Activated T-helper 2 cell treated with anti-CD3 and anti-CD28 coated beads, Interferon-gamma antibody, Interleukin-2, Interleukin-4, amounts not matched to agents 10 μg/mL and 5 μg/mL and 100 μg/mL, durations not matched to agents 14 hours and 24 hours and 36 hours (primary cell): ENCODE measurements at regions of chr11 and their contacts with region 1.

Region 1: GRCh38 chr11:82996966-82997606 is 74.6 kb downstream of the RAB30 start:
- DNase-seq: no peak
- H3K4me3 Mint-ChIP-seq: no peak overlapping the region
- H3K27ac Mint-ChIP-seq: peak overlapping the region; percentile 80
- H3K4me1 Mint-ChIP-seq: peaks cover 78% of the 10 kb centered on the region
- H3K27me3 Mint-ChIP-seq: no peaks in the 10 kb centered on the region

Region 2: GRCh38 chr11:82936261-82936660 is 60.8 kb before region 1 on chr11:
- intact Hi-C with region 1: no loop called
- DNase-seq: no peak
- H3K4me3 Mint-ChIP-seq: no peak overlapping the region
- H3K27ac Mint-ChIP-seq: no peak overlapping the region
- H3K4me1 Mint-ChIP-seq: peaks cover 26% of the 10 kb centered on the region
- H3K27me3 Mint-ChIP-seq: no peaks in the 10 kb centered on the region

Region 3: DNA sequence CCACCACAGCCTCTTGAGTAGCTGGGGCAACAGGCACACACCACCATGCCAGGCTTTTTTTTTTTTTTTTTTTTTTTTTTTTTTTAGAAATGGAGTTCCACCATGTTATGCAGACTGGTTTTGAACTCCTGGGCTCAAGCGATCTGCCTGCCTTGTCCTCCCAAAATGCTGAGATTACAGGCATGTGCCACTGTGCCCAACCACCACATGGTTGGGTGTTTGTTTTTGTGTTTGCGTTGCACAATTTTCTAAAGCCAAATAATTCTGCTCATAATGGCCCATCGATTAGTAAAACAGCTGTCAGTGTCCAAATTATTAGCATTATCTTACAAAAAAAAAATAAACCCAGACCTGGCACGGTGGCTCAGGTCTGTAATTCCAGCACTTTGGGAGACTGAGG is 29.7 kb before region 1 on chr11:
- intact Hi-C with region 1: no loop called
- DNase-seq: no peak
- H3K4me3 Mint-ChIP-seq: no peak overlapping the region
- H3K27ac Mint-ChIP-seq: no peak overlapping the region
- H3K4me1 Mint-ChIP-seq: peaks cover 22% of the 10 kb centered on the region
- H3K27me3 Mint-ChIP-seq: peaks cover 10% of the 10 kb centered on the region

Region 4: DNA sequence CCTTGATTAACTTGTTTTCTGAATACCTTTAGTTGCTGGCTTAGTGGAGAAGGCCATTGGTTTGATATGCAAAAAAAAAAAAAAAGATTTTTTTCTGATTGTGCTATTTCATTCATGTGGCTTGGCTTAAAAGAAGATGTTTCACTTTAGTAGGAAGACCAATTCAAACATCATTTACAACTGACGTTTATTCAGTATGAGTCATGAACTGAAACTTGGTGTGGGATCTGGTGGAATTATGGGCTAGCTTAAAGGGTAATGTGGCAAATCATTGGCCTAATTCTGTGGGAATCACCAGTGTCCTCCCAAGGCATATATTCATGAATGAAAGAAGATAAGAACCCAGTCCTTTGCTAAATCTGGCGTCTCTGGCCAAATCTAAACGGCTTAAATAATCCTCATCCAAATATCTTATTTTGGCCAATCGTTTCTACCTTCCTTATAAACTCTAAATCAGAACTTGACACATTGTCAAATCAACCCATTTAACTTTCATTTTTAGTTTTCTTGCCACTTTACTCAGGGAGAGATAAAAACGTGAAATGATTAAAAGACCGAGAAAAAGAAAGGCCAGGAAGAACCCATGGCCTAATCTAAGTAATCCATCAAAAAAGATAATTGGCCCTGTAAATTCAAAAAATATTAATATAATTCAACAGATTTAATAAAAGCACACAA is 18.5 kb before region 1 on chr11:
- intact Hi-C with region 1: loop called (anchors 1 kb)
- DNase-seq: no peak
- H3K4me3 Mint-ChIP-seq: peak overlapping the region; percentile 9
- H3K27ac Mint-ChIP-seq: peak overlapping the region; percentile 73
- H3K4me1 Mint-ChIP-seq: peaks cover 42% of the 10 kb centered on the region
- H3K27me3 Mint-ChIP-seq: no peaks in the 10 kb centered on the region

Region 5: DNA sequence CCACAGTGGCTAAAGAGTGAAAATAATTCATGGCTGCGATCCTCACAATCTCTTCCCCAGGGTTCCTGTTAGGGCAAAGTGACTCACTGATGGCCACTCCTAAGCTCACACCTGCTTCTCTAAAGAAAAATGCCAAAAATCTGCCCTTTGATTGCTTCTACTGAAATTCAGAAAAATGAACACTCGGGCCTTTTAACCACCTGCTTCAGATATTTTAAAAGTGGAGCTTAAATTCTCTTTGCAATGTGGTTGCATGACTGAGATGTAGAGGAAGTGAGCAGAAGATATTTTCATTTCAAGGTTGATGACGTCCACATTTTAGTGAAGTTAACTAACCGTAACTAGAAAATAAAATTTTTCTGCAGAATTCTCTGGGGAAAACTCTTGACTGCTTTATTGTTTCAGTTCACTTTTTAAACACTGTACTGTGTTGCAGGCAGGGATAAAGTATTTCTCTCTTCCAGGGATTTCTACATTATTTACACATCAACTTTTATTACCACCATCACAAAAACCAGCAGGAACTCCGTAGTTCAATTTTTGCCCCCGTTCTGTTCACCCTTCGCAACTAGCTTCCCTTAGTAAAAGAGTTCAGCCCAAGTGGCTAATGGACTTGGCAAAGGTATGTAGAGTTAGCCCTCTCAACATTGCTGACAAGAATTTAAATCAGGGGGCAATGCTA is 66.1 kb after region 1 on chr11:
- intact Hi-C with region 1: loop called (anchors 2 kb)
- DNase-seq: no peak
- H3K4me3 Mint-ChIP-seq: peak overlapping the region; percentile 73
- H3K27ac Mint-ChIP-seq: peak overlapping the region; percentile 95
- H3K4me1 Mint-ChIP-seq: peaks cover 46% of the 10 kb centered on the region
- H3K27me3 Mint-ChIP-seq: no peaks in the 10 kb centered on the region

Region 6: DNA sequence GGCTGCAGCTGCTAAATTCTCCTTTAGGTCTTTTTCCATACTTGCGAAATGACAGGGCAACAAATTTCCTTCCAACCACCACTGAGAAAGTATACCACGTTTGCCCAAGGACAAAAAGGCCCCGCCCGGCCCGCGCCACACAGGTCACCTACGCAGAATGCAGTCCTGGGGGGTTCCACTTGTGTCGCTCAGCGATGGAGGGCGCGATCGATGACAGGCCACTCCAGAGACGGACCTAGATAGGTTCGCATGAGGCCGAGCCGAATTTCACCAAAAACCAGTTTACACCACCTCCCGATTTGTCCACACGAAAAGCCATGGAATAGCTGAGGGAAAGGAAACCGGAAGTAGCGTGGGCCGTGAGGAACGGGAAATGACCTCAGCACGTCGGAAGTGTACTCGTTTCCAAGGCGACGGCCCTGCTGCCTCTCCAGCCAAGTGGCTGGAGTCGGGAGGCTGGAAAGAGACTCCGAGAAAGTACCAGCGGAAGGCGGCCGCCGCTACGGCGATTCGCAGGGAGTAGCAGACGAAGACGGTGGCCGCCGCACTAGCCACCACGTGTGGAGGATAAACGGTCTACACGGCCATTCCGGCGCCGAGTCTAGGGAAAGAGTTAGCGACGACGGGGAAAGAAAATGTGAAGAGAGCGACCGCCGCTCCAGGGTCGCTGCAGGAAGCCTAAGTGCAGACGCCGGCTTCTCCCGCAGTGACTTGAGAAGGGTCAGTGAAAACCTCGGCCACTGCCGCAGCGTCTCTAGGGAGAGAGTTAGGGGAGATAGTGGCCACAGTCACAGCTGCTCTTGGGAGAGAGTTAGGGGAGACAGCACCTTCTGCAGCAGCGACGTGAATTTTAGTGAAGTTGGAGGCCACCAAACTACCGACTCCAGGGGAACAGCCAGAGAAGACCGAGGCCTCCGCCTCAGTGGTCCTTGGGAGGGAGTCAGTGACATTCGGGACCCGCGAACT is 196.5 kb after region 1 on chr11 and contains the start of gene ANKRD42:
- intact Hi-C with region 1: loop called (anchors 2 kb)
- DNase-seq: peak; percentile 82
- H3K4me3 Mint-ChIP-seq: peak within 1 kb of the TSS; percentile 99
- H3K27ac Mint-ChIP-seq: peak within 1 kb of the TSS; percentile 92
- H3K4me1 Mint-ChIP-seq: peaks cover 21% of the 10 kb centered on the region
- H3K27me3 Mint-ChIP-seq: no peaks in the 10 kb centered on the region
- total RNA-seq, gene ANKRD42: 3.7 TPM in 2 replicates